Colonic mucosa (tissue), 4 donors: ENCODE measurements at regions of chr2 and their contacts with region 1.

Region 1: GRCh38 chr2:229910832-229911412 is 10.9 kb downstream of the TRIP12 start:
- DNase-seq: no peak
- H3K4me3 ChIP-seq: no peak overlapping the region
- H3K27ac ChIP-seq: no peak overlapping the region
- H3K4me1 ChIP-seq: peaks cover 4% of the 10 kb centered on the region
- H3K27me3 ChIP-seq: no peaks in the 10 kb centered on the region
- CTCF ChIP-seq: no peak

Region 2: GRCh38 chr2:229634601-229635370 is 276.1 kb before region 1 on chr2:
- intact Hi-C with region 1: no loop called
- DNase-seq: no peak
- H3K4me3 ChIP-seq: no peak overlapping the region
- H3K27ac ChIP-seq: no peak overlapping the region
- H3K4me1 ChIP-seq: no peaks in the 10 kb centered on the region
- H3K27me3 ChIP-seq: peaks cover 6% of the 10 kb centered on the region
- CTCF ChIP-seq: no peak

Region 3: DNA sequence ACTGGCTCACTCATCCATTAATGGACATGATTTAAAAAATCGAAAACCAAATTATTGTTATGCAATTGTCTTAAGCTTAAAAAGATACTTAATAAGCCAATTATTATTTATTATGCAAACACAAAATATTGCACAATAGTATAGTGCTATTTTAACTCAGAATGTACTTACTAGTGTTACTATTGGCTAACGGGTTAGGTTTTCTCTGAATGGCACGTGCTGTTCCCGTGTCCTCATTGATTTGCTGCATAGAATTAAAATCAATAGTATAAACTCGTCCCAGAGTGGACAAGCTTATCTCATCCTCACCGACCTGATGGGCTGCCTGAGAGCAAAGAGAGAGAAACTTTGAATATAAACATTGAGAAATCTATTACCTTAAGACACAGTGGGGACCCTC is 105.4 kb before region 1 on chr2:
- intact Hi-C with region 1: loop called (anchors 5 kb)
- DNase-seq: no peak
- H3K4me3 ChIP-seq: no peak overlapping the region
- H3K27ac ChIP-seq: no peak overlapping the region
- H3K4me1 ChIP-seq: no peaks in the 10 kb centered on the region
- H3K27me3 ChIP-seq: no peaks in the 10 kb centered on the region
- CTCF ChIP-seq: no peak

Region 4: DNA sequence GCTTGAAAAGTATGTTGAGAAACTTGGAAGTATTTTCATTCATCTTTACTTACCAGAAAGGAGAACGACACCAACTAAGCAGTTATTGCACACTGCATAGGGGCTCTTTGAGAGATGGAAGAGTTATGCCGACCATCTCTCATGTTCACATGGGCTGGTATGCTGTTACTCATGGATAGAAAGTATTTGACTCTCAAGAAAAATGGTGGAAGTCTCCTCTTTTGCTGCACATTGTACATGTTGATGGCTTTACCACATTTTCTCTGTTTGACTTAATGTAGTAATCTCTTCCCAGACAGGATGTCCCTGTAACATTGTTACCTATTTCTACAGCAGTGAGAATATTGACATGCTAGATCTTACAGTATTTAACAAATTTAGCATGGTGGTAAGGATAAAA is 825.0 kb after region 1 on chr2:
- intact Hi-C with region 1: no loop called
- DNase-seq: no peak
- H3K4me3 ChIP-seq: no peak overlapping the region
- H3K27ac ChIP-seq: no peak overlapping the region
- H3K4me1 ChIP-seq: peaks cover 12% of the 10 kb centered on the region
- H3K27me3 ChIP-seq: no peaks in the 10 kb centered on the region
- CTCF ChIP-seq: no peak